Esophagus muscularis mucosa (tissue), 4 donors: ENCODE measurements at regions of chr20 and their contacts with region 1.

Region 1: DNA sequence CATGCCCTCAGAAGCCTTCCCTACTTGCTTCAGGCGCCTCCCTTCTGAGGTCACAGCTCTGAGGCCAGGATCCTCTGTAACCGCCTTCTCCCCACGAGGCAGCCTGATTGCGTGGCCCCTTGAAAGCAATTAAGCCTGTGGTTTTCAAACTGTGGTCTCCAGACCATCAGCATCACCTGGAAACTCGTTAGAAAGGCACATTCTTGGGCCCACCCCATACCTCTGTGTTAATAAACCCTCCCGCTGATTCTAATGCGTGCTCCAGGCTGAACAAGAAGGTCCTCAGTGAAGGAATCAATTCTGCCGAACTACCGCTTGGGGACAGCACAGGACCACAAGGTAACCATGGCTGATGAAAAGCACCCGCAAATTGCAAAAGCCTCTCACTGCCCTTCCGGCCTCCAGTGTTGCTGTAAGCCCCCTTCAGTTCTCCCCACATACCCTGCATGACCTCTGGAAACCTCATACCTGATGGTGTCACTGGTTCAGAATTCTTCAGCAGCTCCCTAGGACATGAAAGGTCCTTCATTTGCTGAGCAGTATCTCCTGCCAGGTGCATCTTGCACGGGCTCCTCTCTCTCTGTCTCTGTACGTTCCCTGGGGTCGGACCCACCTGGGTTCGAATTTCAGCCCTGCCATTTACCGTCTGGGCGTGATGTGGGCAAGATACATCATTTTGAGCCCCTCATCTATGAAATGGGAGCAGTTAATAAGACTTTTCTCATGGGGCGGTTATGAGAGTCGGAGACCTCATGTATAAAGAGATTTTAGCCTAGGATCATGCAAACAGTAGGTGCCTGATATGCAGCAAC is 93.3 kb upstream of the RNF24 start:
- DNase-seq: no peak
- H3K4me3 ChIP-seq: no peak overlapping the region
- H3K27ac ChIP-seq: no peak overlapping the region
- H3K4me1 ChIP-seq: peaks cover 3 to 13% (median 9%) of the 10 kb centered on the region in 4 donors
- H3K27me3 ChIP-seq: peaks cover 0 to 8% (median 0%) of the 10 kb centered on the region in 4 donors
- CTCF ChIP-seq: peak; percentile 90 to 98 (median 96)
- EP300 ChIP-seq: no peak
- POLR2A ChIP-seq: no peak

Region 2: GRCh38 chr20:4171538-4172116 is 62.9 kb after region 1 on chr20:
- intact Hi-C with region 1: loop called (anchors 1 kb)
- DNase-seq: no peak
- H3K4me3 ChIP-seq: peak overlapping the region; percentile 59 to 63 (median 60)
- H3K27ac ChIP-seq: peak overlapping the region; percentile 35 to 78 (median 59)
- H3K4me1 ChIP-seq: peaks cover 5 to 26% (median 16%) of the 10 kb centered on the region in 4 donors
- H3K27me3 ChIP-seq: no peaks in the 10 kb centered on the region
- CTCF ChIP-seq: no peak
- EP300 ChIP-seq: no peak
- POLR2A ChIP-seq: no peak

Region 3: GRCh38 chr20:4592316-4593148 is 483.8 kb after region 1 on chr20:
- intact Hi-C with region 1: loop called (anchors 5 kb)
- DNase-seq: no peak
- H3K4me3 ChIP-seq: peak overlapping the region; percentile 41 to 55 (median 44)
- H3K27ac ChIP-seq: no peak overlapping the region
- H3K4me1 ChIP-seq: peaks cover 7 to 14% (median 10%) of the 10 kb centered on the region in 4 donors
- H3K27me3 ChIP-seq: peaks cover 0 to 12% (median 0%) of the 10 kb centered on the region in 4 donors
- CTCF ChIP-seq: peak; percentile 75 to 95 (median 90)
- EP300 ChIP-seq: no peak
- POLR2A ChIP-seq: no peak